MCF 10A (cell line): ENCODE measurements at regions of chr1 and their contacts with region 1.

Region 1: DNA sequence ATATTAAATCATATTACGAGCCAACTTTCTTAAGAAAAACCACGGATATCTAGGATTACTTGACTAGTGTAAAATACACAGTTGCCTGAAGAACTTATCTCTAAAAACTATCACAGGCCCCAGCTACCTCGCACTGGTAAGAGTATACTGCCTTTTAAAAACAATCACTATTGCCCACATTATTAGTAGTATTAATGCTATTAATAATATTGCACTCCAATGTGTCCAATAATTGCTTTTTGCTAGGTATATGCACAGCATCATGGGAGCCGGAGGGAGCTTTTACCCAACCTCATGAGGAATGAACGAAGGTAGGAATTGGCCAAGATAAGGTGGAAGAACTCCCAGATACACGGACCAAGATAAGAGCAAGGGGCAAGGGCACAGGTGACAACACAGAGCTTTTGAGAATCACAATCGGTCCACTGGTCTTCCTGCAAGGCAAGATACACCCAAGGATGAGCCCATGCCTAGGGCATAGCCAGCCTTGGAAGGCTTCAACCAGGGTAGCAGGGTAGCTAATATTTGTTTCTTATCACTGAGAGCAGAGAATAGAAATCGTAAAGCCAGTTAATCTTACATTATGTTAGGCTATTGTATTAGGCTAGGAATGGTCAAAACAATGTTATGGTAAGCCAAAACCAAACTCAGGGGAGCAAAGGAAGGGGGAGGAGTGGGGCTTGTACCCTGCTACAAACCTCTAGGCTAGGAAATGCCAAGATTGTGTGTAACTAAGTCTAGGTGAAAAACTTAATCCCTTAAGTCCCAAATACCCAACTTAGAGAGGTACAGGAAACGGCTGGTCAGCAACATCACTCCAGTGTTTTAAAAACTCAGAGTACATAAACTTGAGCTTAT is 9.4 kb downstream of the GLUL start:
- DNase-seq: no peak
- H3K4me3 Mint-ChIP-seq: no peak overlapping the region
- H3K27ac Mint-ChIP-seq: peak overlapping the region; percentile 78
- H3K4me1 Mint-ChIP-seq: peaks cover 39% of the 10 kb centered on the region
- H3K27me3 Mint-ChIP-seq: no peaks in the 10 kb centered on the region
- CTCF ChIP-seq: no peak

Region 2: GRCh38 chr1:182206626-182207239 is 175.5 kb before region 1 on chr1:
- CTCF ChIA-PET with region 1: interaction called, 3 read pairs
- POLR2A ChIA-PET with region 1: interaction called, 14 read pairs
- intact Hi-C with region 1: no loop called
- DNase-seq: no peak
- H3K4me3 Mint-ChIP-seq: no peak overlapping the region
- H3K27ac Mint-ChIP-seq: no peak overlapping the region
- H3K4me1 Mint-ChIP-seq: peaks cover 5% of the 10 kb centered on the region
- H3K27me3 Mint-ChIP-seq: no peaks in the 10 kb centered on the region
- CTCF ChIP-seq: no peak